ENCODE measurements at regions of chr2 and their contacts with region 1.

Region 1: DNA sequence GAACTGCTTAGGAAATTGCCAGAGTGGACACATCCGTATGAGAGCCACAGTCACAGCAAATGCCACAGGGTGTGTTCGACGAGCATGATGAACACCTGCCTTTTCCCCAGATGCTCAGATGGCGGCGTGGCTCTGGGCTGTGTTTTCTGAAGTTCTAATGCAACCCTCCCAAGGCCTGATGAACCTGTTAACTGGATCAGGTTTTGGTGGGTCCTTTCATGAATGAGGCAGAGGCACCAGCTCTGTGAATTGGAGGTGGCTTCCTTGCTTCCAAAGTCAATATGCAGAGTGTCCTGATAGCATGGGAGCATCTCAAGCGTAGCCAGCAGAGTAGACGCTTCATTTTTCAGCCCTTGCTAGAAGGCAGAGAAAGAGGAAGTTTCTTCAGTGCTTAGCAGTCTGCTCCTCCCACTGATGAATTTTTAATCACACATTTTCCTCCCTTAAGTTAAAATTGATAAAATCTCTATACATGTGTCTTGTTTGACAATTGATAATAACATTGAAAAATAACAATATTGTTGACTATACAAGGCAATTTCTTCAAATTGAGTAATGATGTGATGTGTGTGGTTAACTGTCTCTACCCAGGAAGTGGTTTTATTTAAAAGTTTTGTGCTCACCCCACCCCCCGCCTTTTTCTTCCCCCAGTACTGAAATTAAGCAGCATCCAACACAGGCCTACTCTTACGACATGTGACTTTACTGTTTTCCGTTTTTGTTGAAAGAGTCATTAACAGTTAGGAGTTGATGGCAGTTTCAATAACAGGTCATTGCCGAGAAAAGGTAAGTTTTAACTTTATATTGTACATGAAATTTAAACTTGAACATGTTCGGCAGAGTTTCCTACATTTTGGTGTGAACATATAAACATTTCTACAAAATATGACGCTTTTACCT is at the start of gene ARHGAP15:
- DNase-seq: peak; percentile 42 to 88 (median 76)
- ATAC-seq: peak; percentile 88 to 91 (median 90)
- H3K4me3 ChIP-seq: peak within 1 kb of the TSS; percentile 49 to 58
- H3K4me3 Mint-ChIP-seq: peak within 1 kb of the TSS; percentile 79 to 82 (median 80)
- H3K27ac ChIP-seq: peak within 1 kb of the TSS; percentile 89
- H3K27ac Mint-ChIP-seq: peak within 1 kb of the TSS; percentile 90 to 100
- H3K4me1 ChIP-seq: peaks cover 43 to 71% of the 10 kb centered on the region in 2 experiments
- H3K4me1 Mint-ChIP-seq: peaks cover 39 to 54% (median 49%) of the 10 kb centered on the region in 3 donors
- H3K27me3 ChIP-seq: no peaks in the 10 kb centered on the region
- H3K27me3 Mint-ChIP-seq: no peaks in the 10 kb centered on the region
- total RNA-seq, gene ARHGAP15: 154 to 271 (median 188) TPM

Region 2: GRCh38 chr2:143140864-143141661 is 12.1 kb after region 1 on chr2:
- CTCF ChIA-PET with region 1: interaction called, 3 to 6 read pairs
- POLR2A ChIA-PET with region 1: interaction called, 5 to 14 read pairs
- DNase-seq: no peak
- ATAC-seq: peak in 3 of 4 experiments; percentile 26 to 34 (median 33)
- H3K4me3 ChIP-seq: no peak overlapping the region
- H3K4me3 Mint-ChIP-seq: peak overlapping the region; percentile 71 to 72 (median 71)
- H3K27ac ChIP-seq: no peak overlapping the region
- H3K27ac Mint-ChIP-seq: peak overlapping the region; percentile 69 to 78
- H3K4me1 ChIP-seq: peaks cover 18 to 55% of the 10 kb centered on the region in 2 experiments
- H3K4me1 Mint-ChIP-seq: peaks cover 89 to 97% (median 92%) of the 10 kb centered on the region in 3 donors
- H3K27me3 ChIP-seq: no peaks in the 10 kb centered on the region
- H3K27me3 Mint-ChIP-seq: no peaks in the 10 kb centered on the region

Measured in T-cell (primary cell).